Ascending aorta (tissue), 2 donors: ENCODE measurements at regions of chr1 and their contacts with region 1.

Region 1: DNA sequence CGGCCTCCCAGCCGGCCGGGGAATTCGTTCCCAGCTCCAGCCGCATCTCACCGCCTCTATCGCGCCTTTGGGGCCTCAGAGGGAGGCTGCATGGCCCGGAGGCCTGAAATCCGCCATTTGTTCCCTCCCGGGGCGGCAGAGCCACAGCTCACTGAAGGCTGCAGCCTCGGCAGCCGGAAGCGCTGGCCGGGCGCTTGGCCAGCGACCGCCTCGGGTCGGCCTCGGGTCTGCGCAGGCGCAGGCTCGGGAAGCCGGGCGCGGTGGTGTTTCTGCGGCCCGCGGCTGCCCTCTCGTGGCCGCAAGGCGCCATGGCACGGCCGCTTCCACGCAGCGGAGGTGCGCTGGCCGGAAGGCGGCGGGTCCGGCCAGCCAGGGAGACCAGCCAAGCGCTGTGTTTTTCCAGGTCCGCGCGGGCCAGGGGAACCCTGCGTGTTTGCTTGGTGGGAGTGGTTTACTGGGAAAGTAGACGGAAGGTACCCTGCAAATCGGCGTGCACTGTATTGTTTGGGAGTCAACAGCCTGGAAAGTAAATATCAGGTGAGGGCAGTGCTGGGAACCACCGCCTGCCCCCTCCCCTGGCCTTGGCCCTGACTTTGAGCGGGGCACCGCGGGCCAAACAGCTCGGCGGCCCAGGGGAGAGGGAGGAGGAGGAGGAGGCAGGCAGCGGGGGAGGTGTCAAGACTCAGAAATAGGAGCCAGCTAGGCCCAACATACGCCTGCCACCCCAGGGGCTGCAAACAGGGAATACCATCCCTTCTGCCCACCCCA is 52.7 kb upstream of the CD34 start:
- DNase-seq: peak; percentile 35 to 95
- H3K4me3 ChIP-seq: peak overlapping the region; percentile 57 to 62
- H3K27ac ChIP-seq: peak overlapping the region; percentile 92
- H3K4me1 ChIP-seq: peaks cover 0 to 27% of the 10 kb centered on the region in 2 donors
- H3K27me3 ChIP-seq: no peaks in the 10 kb centered on the region
- CTCF ChIP-seq: peak; percentile 90 to 100 (median 96)

Region 2: GRCh38 chr1:207751790-207752455 is 211.7 kb before region 1 on chr1 and contains the start of gene CD46:
- intact Hi-C with region 1: loop called (anchors 2 kb)
- DNase-seq: peak; percentile 90 to 98
- H3K4me3 ChIP-seq: peak within 1 kb of the TSS; percentile 83 to 91
- H3K27ac ChIP-seq: peak within 1 kb of the TSS; percentile 84
- H3K4me1 ChIP-seq: peaks cover 0 to 18% of the 10 kb centered on the region in 2 donors
- H3K27me3 ChIP-seq: no peaks in the 10 kb centered on the region
- CTCF ChIP-seq: no peak
- total RNA-seq, gene CD46: 64.5 TPM

Region 3: GRCh38 chr1:207853372-207853757 is 110.2 kb before region 1 on chr1:
- intact Hi-C with region 1: no loop called
- DNase-seq: peak in 1 of 2 donors; percentile 33
- H3K4me3 ChIP-seq: no peak overlapping the region
- H3K27ac ChIP-seq: peak overlapping the region; percentile 74 to 82
- H3K4me1 ChIP-seq: peaks cover 20 to 58% of the 10 kb centered on the region in 2 donors
- H3K27me3 ChIP-seq: no peaks in the 10 kb centered on the region
- CTCF ChIP-seq: no peak

Region 4: GRCh38 chr1:207885129-207886032 is 78.2 kb before region 1 on chr1:
- intact Hi-C with region 1: loop called (anchors 1 kb)
- DNase-seq: peak in 1 of 2 donors; percentile 92
- H3K4me3 ChIP-seq: no peak overlapping the region
- H3K27ac ChIP-seq: peak overlapping the region; percentile 21 to 57
- H3K4me1 ChIP-seq: peaks cover 13 to 26% of the 10 kb centered on the region in 2 donors
- H3K27me3 ChIP-seq: no peaks in the 10 kb centered on the region
- CTCF ChIP-seq: peak; percentile 94 to 97 (median 96)

Region 5: GRCh38 chr1:207897188-207897587 is 66.4 kb before region 1 on chr1:
- intact Hi-C with region 1: loop called (anchors 1 kb)
- DNase-seq: no peak
- H3K4me3 ChIP-seq: no peak overlapping the region
- H3K27ac ChIP-seq: peak overlapping the region; percentile 61 to 62
- H3K4me1 ChIP-seq: peaks cover 0 to 5% of the 10 kb centered on the region in 2 donors
- H3K27me3 ChIP-seq: no peaks in the 10 kb centered on the region
- CTCF ChIP-seq: peak in 2 of 3 experiments; percentile 25 to 39

Region 6: GRCh38 chr1:207938016-207938415 is 25.6 kb before region 1 on chr1:
- intact Hi-C with region 1: loop called (anchors 1 kb)
- DNase-seq: peak in 1 of 2 donors; percentile 78
- H3K4me3 ChIP-seq: no peak overlapping the region
- H3K27ac ChIP-seq: peak overlapping the region; percentile 29 to 53
- H3K4me1 ChIP-seq: peaks cover 3 to 18% of the 10 kb centered on the region in 2 donors
- H3K27me3 ChIP-seq: no peaks in the 10 kb centered on the region
- CTCF ChIP-seq: no peak

Region 7: DNA sequence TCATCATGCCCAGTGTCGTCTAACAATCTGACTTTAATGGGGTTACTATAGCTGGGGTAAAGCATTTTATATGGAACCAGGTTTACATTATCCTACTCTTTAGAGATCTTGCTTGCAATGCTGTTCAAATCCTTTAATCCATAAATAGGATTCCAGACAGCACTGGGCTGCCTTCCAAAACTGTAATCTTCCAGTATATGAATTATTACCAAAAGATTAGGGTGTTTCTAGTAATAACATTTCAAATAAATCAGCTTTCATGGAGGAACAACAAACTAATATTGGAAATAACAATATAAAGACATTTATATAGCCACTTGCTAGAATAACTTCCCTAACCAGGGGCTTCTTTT is 369.1 kb after region 1 on chr1:
- intact Hi-C with region 1: no loop called
- DNase-seq: no peak
- H3K4me3 ChIP-seq: no peak overlapping the region
- H3K27ac ChIP-seq: no peak overlapping the region
- H3K4me1 ChIP-seq: no peaks in the 10 kb centered on the region
- H3K27me3 ChIP-seq: no peaks in the 10 kb centered on the region
- CTCF ChIP-seq: no peak